ENCODE measurements at regions of chr2 and their contacts with region 1.

Region 1: DNA sequence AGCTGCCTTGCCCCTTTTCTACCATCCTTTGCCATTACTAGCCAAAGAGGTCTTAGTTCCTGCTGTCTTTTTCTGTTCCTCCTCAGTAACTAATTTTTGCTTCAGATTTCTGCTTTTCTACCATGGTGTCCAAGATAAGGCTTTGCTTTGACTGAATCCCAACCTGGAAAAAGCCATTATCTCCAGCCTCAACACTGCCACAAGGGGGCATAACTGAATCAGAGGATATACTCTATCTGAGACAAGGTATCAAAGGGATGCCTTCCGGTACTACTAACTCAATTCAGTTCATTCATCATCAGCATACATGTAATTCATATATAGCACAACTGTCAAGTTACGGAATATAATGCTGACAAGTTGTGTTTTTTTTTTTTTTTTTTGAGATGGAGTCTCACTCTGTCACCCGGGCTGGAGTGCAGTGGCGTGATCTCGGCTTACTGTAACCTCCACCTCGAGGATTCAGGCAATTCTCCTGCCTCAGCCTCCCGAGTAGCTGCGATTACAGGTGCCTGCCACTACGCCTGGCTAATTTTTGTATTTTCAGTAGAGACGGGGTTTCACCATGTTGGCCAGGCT is 11.4 kb downstream of the OSGEPL1 start:
- DNase-seq: no peak
- H3K4me3 ChIP-seq: no peak overlapping the region
- CTCF ChIP-seq: no peak
- POLR2A ChIP-seq: no peak

Region 2: DNA sequence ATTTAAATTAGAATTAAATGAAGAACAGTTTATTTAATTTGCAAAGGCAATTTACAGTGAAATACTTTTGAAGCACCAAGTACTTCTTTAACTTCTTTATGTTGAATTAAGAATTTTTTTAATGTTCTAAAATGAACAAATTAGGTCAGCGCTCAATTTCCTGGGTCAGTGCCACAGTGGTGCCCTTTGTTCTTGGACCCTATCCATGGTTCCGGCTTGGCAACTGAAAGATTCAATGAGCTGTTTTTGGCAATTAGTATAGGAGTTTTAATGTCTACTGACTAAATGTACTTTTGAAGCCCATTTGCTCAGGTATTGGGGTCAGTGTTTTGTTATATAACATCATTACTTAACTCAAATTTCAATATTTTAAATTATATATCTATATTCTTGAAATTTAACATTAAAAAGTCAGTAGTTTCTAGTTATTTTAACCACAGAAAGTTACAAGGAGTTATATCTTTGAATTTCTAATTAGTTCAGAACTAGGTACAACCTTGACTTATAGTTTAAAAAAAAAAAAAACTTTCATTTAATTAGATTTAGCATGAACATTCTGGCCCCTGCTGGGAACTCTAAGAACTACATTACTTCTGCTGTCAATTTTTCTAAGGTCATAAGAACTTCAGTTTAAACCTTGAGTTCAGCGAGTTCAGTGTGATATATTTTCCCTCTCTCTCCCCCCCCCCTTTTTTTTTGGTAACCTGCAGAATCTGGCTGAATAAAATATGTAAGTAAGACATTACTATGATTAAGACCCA is 318.9 kb after region 1 on chr2:
- intact Hi-C with region 1: loop called (anchors 10 kb)
- DNase-seq: peak in 1 of 2 donors; percentile 37
- H3K4me3 ChIP-seq: no peak overlapping the region
- CTCF ChIP-seq: no peak
- POLR2A ChIP-seq: no peak